IMR-90 (cell line): ENCODE measurements at regions of chr4 and their contacts with region 1.

Region 1: GRCh38 chr4:44279066-44279465 is 169.5 kb downstream of the KCTD8 start:
- DNase-seq: no peak
- ATAC-seq: no peak
- H3K4me3 ChIP-seq: no peak overlapping the region
- H3K27ac ChIP-seq: no peak overlapping the region
- H3K4me1 ChIP-seq: no peaks in the 10 kb centered on the region
- H3K27me3 ChIP-seq: no peaks in the 10 kb centered on the region
- CTCF ChIP-seq: no peak
- POLR2A ChIP-seq: no peak
- RAD21 ChIP-seq: no peak

Region 2: DNA sequence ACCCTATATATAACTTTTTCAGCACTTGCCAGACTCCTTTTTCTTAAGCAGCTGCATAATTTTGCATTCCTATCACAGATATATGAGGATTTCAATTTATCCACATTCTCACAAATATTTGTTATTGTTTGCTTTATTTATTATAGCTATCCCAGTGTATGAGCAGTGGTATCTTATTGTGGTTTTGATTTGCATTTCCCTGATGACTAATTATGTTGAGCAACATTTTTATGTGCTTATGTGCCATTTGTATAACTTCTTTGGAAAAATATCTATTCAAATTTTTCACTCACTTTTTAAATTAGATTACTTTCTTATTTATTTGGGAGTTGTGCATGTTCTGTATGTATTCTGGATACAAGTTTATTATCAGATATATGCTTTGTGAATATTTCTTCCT is 192.3 kb before region 1 on chr4:
- CTCF ChIA-PET with region 1: no interaction called
- POLR2A ChIA-PET with region 1: no interaction called
- dilution Hi-C with region 1: no loop called
- in situ Hi-C with region 1: no loop called
- intact Hi-C with region 1: loop called (anchors 10 kb)
- DNase-seq: no peak
- ATAC-seq: no peak
- H3K4me3 ChIP-seq: no peak overlapping the region
- H3K27ac ChIP-seq: no peak overlapping the region
- H3K4me1 ChIP-seq: no peaks in the 10 kb centered on the region
- H3K27me3 ChIP-seq: no peaks in the 10 kb centered on the region
- CTCF ChIP-seq: no peak
- POLR2A ChIP-seq: no peak
- RAD21 ChIP-seq: no peak

Region 3: DNA sequence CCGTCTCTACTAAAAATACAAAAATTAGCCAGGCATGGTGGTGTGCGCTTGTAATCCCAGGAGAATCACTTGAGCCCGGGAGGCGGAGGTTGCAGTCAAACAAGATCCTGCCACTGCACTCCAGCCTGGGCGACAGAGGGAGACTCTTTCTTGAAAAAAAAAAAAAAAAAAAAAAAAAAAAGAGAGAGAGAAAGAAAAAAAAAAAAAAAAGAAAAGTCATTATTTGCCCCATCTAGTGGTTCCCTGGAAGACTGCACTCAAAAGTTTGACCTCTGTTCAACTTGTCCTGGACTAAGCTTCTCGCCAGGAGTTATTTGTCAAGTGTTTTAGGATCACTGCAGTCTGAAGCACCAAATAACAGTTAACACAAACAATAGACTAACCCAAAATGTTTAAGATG is 214.9 kb after region 1 on chr4:
- CTCF ChIA-PET with region 1: no interaction called
- POLR2A ChIA-PET with region 1: no interaction called
- dilution Hi-C with region 1: no loop called
- in situ Hi-C with region 1: no loop called
- intact Hi-C with region 1: no loop called
- DNase-seq: no peak
- ATAC-seq: no peak
- H3K4me3 ChIP-seq: no peak overlapping the region
- H3K27ac ChIP-seq: no peak overlapping the region
- H3K4me1 ChIP-seq: no peaks in the 10 kb centered on the region
- H3K27me3 ChIP-seq: no peaks in the 10 kb centered on the region
- CTCF ChIP-seq: peak; percentile 41
- POLR2A ChIP-seq: no peak
- RAD21 ChIP-seq: peak; percentile 19; the same call in 1 of the 2 replicates

Region 4: DNA sequence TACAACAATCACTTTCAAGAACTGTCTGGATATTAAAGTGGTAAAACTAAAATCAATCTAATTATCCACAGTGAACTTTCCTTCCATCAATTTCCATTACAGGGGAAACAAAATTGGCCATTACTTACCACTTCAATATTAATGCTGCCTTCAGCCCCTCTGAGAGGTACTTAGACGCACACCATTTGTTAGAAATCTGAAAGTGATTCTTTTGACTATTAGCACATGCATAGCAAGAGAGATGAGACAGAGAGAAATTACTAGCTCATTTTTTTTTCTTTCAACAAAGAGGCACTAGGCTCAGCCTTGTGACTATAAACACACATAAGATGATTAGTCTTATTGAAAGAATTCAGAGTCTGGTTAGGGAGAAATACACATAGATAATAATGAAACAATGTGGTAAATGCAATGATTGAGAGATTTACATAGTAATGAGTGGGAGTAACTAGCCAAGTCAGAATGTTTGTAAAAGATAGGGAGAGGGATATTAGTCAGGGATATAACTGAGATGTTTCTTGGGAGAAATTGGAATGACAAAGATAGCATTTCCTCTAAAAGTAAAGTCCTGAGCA is 279.1 kb after region 1 on chr4:
- CTCF ChIA-PET with region 1: no interaction called
- POLR2A ChIA-PET with region 1: no interaction called
- dilution Hi-C with region 1: no loop called
- in situ Hi-C with region 1: no loop called
- intact Hi-C with region 1: no loop called
- DNase-seq: no peak
- ATAC-seq: no peak
- H3K4me3 ChIP-seq: no peak overlapping the region
- H3K27ac ChIP-seq: no peak overlapping the region
- H3K4me1 ChIP-seq: no peaks in the 10 kb centered on the region
- H3K27me3 ChIP-seq: no peaks in the 10 kb centered on the region
- CTCF ChIP-seq: no peak
- POLR2A ChIP-seq: no peak
- RAD21 ChIP-seq: no peak